Natural killer cell (primary cell): ENCODE measurements at regions of chr18 and their contacts with region 1.

Region 1: DNA sequence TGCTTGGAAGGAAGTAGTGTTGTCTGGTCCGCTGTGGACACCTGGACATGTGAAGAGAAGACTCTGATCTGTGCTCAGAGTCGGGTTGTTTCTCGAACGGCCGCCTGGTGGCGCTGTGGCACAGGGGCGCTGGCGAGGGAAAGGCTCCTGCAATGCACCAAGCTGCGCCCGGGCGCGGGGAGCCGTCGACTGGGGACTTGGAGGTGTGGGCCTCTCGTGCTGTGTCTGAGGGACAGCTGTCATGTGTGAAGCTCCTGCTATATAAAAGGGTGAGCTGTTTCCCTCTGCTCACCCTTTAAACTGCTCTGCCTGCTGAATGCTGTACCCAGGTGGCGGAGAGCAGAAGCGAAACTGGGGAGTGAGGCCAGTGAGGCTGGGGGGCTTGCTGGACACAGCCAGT is 44.0 kb downstream of the GNAL start:
- DNase-seq: peak; percentile 58 to 75
- ATAC-seq: peak; percentile 82 to 92 (median 83)
- H3K4me3 ChIP-seq: no peak overlapping the region
- H3K4me3 Mint-ChIP-seq: peak overlapping the region; percentile 53
- H3K27ac ChIP-seq: no peak overlapping the region
- H3K27ac Mint-ChIP-seq: no peak overlapping the region
- H3K4me1 ChIP-seq: peaks cover 4% of the 10 kb centered on the region
- H3K4me1 Mint-ChIP-seq: peaks cover 0 to 5% of the 10 kb centered on the region in 2 donors
- H3K27me3 ChIP-seq: peaks cover 3% of the 10 kb centered on the region
- H3K27me3 Mint-ChIP-seq: peaks cover 14 to 26% of the 10 kb centered on the region in 2 donors
- CTCF ChIP-seq: peak; percentile 85

Region 2: GRCh38 chr18:11676867-11677266 is 56.2 kb before region 1 on chr18:
- intact Hi-C with region 1: no loop called
- DNase-seq: no peak
- ATAC-seq: no peak
- H3K4me3 ChIP-seq: no peak overlapping the region
- H3K4me3 Mint-ChIP-seq: no peak overlapping the region
- H3K27ac ChIP-seq: no peak overlapping the region
- H3K27ac Mint-ChIP-seq: no peak overlapping the region
- H3K4me1 ChIP-seq: no peaks in the 10 kb centered on the region
- H3K4me1 Mint-ChIP-seq: no peaks in the 10 kb centered on the region
- H3K27me3 ChIP-seq: peaks cover 3% of the 10 kb centered on the region
- H3K27me3 Mint-ChIP-seq: peaks cover 20 to 51% of the 10 kb centered on the region in 2 donors
- CTCF ChIP-seq: no peak

Region 3: DNA sequence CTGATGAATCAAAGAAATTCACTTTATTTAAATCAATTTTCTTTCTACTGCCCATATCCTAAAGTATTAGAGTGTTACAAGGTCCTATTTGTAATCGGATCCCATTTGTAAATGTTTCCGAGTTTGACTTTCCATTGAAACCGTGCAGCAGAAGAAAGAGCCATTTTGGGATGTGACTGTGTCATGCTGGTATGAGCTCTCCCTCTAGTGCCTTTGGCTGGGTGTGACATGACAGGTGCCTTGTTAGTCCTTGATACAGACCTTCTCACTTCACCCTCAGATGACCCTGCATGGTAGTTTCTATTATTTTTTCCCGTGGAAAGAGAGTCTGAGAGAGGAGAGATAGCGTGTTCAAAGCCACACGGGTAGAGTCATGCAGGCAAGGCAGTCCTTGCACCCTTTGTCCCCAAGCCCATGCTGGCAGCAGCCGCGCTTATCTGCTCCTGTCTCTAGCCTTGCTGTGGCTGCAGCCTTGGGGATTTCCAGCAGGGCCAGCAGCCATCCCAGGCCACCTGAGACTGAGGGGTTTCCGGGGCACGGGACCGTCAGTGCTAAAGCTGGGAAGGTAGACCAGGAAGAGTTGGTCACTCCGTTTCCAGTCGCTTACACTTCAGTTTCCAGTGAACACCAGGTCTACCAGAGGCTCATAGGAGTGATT is 139.6 kb after region 1 on chr18:
- intact Hi-C with region 1: loop called (anchors 1 kb)
- DNase-seq: peak in 1 of 2 donors; percentile 58
- ATAC-seq: peak in 2 of 3 donors; percentile 46 to 58
- H3K4me3 ChIP-seq: no peak overlapping the region
- H3K4me3 Mint-ChIP-seq: no peak overlapping the region
- H3K27ac ChIP-seq: no peak overlapping the region
- H3K27ac Mint-ChIP-seq: no peak overlapping the region
- H3K4me1 ChIP-seq: no peaks in the 10 kb centered on the region
- H3K4me1 Mint-ChIP-seq: no peaks in the 10 kb centered on the region
- H3K27me3 ChIP-seq: no peaks in the 10 kb centered on the region
- H3K27me3 Mint-ChIP-seq: peaks cover 0 to 2% of the 10 kb centered on the region in 2 donors
- CTCF ChIP-seq: peak; percentile 11

Region 4: DNA sequence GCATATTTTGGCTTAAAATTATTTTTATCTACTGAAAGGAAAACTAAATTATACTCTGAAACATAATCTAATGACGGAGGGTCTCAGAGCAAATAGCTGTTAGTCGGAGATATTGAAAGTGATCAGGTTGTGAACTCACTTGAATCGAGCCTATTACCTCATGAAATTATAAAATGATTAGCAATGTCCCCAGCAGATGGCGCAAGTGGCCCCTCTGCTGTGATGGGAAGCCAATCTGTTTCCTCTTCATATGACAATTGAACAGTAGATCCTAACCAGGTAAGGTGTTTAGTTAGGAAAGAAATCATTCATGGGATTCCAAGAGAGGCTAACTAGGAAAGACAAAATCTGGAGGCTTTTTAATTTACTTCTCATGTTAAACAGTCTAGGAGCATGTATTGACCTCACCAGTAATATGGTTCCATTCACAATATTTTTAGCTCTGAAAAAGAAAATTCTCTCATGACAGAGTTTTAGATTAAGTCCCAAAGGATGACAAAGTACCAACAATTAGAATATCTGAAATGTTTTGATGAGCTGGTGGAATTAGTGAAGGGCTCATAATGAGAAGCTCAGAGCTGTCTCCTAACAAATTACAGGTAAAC is 204.9 kb after region 1 on chr18:
- intact Hi-C with region 1: loop called (anchors 1 kb)
- DNase-seq: peak; percentile 62 to 87
- ATAC-seq: peak; percentile 72 to 80 (median 72)
- H3K4me3 ChIP-seq: no peak overlapping the region
- H3K4me3 Mint-ChIP-seq: no peak overlapping the region
- H3K27ac ChIP-seq: no peak overlapping the region
- H3K27ac Mint-ChIP-seq: no peak overlapping the region
- H3K4me1 ChIP-seq: no peaks in the 10 kb centered on the region
- H3K4me1 Mint-ChIP-seq: peaks cover 4 to 6% of the 10 kb centered on the region in 2 donors
- H3K27me3 ChIP-seq: no peaks in the 10 kb centered on the region
- H3K27me3 Mint-ChIP-seq: peaks cover 0 to 4% of the 10 kb centered on the region in 2 donors
- CTCF ChIP-seq: peak; percentile 78

Region 5: DNA sequence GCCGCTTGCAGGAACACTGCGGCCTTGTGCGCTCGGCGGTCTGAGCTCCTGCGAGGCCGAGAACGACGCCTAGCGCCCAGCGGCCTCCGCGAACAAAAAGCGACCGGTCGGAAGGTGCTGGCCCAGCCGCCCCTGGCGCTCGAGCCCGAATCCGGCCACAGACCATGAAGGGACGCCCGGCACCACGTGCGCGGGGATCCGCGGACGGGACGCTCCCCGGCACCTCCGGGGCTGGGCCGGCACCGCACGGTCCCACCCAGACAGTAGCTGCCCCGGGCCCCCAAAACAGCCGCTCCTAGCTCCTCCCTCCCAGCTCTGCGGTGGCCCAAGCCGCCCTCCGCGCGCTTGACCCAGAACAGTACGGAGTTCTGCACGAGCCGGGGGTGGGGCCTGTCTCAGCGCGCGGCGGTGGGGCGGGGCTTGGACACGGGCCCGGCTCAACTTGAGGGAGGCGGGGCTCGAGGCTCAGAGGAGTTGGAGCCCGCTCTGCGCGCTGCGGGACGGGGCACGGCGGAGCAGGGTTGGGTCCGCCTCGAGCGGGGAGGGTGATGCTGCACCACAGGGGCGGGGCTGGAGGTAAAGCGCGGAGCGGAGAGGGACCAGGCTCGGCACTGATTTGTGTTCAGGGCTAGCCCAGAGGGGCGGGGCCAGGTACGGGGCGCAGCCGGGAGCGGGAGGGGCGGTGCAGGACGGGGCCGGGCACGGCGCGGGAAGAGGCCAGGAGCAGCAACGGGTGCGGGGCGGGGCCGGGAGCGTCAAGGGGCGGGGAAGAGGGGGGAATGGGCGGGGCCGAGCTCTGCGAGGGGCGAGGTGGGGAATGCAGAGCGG is 247.7 kb after region 1 on chr18:
- intact Hi-C with region 1: no loop called
- DNase-seq: peak; percentile 81 to 97
- ATAC-seq: peak; percentile 87 to 95 (median 88)
- H3K4me3 ChIP-seq: peak overlapping the region; percentile 51
- H3K4me3 Mint-ChIP-seq: peak overlapping the region; percentile 87
- H3K27ac ChIP-seq: peak overlapping the region; percentile 0
- H3K27ac Mint-ChIP-seq: peak overlapping the region; percentile 51 to 79
- H3K4me1 ChIP-seq: peaks cover 16% of the 10 kb centered on the region
- H3K4me1 Mint-ChIP-seq: peaks cover 6 to 18% of the 10 kb centered on the region in 2 donors
- H3K27me3 ChIP-seq: no peaks in the 10 kb centered on the region
- H3K27me3 Mint-ChIP-seq: no peaks in the 10 kb centered on the region
- CTCF ChIP-seq: no peak